ENCODE measurements at regions of chr13 and their contacts with region 1.

Region 1: GRCh38 chr13:29595380-29596063 is at the start of gene SLC7A1:
- DNase-seq: peak; percentile 74 to 87 (median 75)
- ATAC-seq: peak; percentile 64 to 95 (median 92)
- H3K4me3 ChIP-seq: peak within 1 kb of the TSS; percentile 51 to 98 (median 81)
- H3K27ac ChIP-seq: peak within 1 kb of the TSS; percentile 7 to 94 (median 82)
- H3K4me1 ChIP-seq: peaks cover 0 to 20% (median 5%) of the 10 kb centered on the region in 12 donors
- H3K27me3 ChIP-seq: peaks cover 0 to 6% (median 0%) of the 10 kb centered on the region in 9 donors
- CTCF ChIP-seq: peak in 1 of 12 donors; percentile 25
- POLR2A ChIP-seq: no peak
- total RNA-seq, gene SLC7A1: 8.3 to 66.7 (median 14.3) TPM

Region 2: DNA sequence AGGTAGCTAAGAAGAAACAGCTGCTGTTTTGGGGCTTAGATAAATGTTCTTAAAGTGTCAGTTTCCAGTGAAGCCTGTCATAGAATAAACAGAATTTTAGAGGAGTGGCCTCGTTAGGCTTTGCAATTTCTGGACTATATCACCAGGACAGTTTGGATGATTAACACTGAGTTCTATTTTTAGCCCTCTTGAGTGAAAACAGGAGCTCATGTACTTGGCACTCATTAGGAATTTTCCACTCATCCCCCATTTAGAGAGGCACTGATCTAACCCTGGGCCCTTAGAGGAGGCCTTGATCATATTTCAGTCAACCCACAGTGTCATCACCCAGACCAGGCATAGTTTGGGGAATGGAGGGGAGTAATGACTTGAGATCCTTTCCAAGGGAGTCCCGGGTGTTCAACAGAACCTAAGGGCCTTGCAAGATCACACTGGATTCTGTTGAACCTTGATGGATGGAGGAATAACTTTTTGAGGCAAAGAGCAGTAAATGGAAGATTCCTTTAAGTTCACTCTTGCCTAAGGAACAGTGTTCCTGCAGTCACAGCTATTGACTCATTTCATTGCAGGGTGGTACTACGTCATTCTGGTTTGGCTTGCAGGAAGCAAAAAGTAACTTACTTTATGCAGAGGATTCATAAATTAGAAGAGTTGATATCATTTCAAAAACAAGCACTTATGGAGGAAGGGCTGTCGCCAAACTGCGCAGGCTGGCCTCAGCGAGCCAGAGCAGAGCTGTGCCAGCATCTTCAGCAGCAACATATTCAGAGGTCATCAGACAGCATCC is 160.2 kb before region 1 on chr13:
- intact Hi-C with region 1: no loop called
- DNase-seq: peak in 2 of 5 donors; percentile 40 to 47
- ATAC-seq: peak; percentile 87 to 93 (median 90)
- H3K4me3 ChIP-seq: peak overlapping the region in 1 of 12 donors; percentile 3
- H3K27ac ChIP-seq: peak overlapping the region; percentile 69 to 94 (median 88)
- H3K4me1 ChIP-seq: peaks cover 0 to 82% (median 26%) of the 10 kb centered on the region in 12 donors
- H3K27me3 ChIP-seq: peaks cover 0 to under 1% (median 0%) of the 10 kb centered on the region in 9 donors
- CTCF ChIP-seq: no peak
- POLR2A ChIP-seq: no peak

Region 3: GRCh38 chr13:29513397-29514322 is 81.9 kb before region 1 on chr13:
- intact Hi-C with region 1: loop called in 2 of 10 experiments (anchors 5 kb)
- DNase-seq: no peak
- ATAC-seq: peak; percentile 32 to 61 (median 56)
- H3K4me3 ChIP-seq: no peak overlapping the region
- H3K27ac ChIP-seq: peak overlapping the region in 3 of 12 donors; percentile 19 to 54 (median 42)
- H3K4me1 ChIP-seq: peaks cover 0 to 18% (median 4%) of the 10 kb centered on the region in 12 donors
- H3K27me3 ChIP-seq: no peaks in the 10 kb centered on the region
- CTCF ChIP-seq: no peak
- POLR2A ChIP-seq: no peak

Region 4: GRCh38 chr13:29689548-29689947 is 94.0 kb after region 1 on chr13:
- intact Hi-C with region 1: loop called in 1 of 10 experiments (anchors 5 kb)
- DNase-seq: no peak
- ATAC-seq: no peak
- H3K4me3 ChIP-seq: no peak overlapping the region
- H3K27ac ChIP-seq: no peak overlapping the region
- H3K4me1 ChIP-seq: peaks cover 0 to 15% (median 0%) of the 10 kb centered on the region in 12 donors
- H3K27me3 ChIP-seq: no peaks in the 10 kb centered on the region
- CTCF ChIP-seq: no peak
- POLR2A ChIP-seq: no peak

Measured in heart left ventricle (tissue), 16 donors.